ENCODE measurements at regions of chr2 and their contacts with region 1.

Region 1: DNA sequence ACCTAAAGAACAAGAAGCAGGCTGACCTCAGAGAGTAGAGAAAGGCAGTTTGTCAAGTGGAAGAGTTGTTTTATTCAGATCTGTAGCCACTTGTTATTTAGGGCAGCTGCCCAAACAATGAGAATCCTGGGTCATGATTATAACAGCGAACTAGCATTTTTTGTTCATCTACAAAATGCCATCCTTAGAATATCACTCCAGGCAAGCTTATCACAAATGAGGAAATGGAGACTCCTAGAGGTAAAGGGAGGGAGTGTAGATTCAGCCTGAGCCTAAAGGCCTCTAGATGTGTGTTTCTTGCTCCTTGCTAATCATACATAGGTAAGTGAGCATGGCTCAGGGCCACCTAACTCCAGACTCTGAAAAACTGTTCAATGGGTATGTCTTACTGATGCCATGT is 126.1 kb downstream of the HNMT start:
- DNase-seq: peak; percentile 76
- H3K4me3 ChIP-seq: no peak overlapping the region
- H3K27ac ChIP-seq: no peak overlapping the region
- H3K4me1 ChIP-seq: no peaks in the 10 kb centered on the region
- H3K27me3 ChIP-seq: no peaks in the 10 kb centered on the region
- CTCF ChIP-seq: peak; percentile 53 to 70
- POLR2A ChIP-seq: no peak

Region 2: GRCh38 chr2:137729305-137729704 is 361.0 kb before region 1 on chr2:
- CTCF ChIA-PET with region 1: no interaction called
- POLR2A ChIA-PET with region 1: no interaction called
- dilution Hi-C with region 1: no loop called
- intact Hi-C with region 1: no loop called
- DNase-seq: no peak
- H3K4me3 ChIP-seq: no peak overlapping the region
- H3K27ac ChIP-seq: no peak overlapping the region
- H3K4me1 ChIP-seq: no peaks in the 10 kb centered on the region
- H3K27me3 ChIP-seq: no peaks in the 10 kb centered on the region
- CTCF ChIP-seq: no peak
- POLR2A ChIP-seq: no peak

Region 3: GRCh38 chr2:137888845-137889244 is 201.5 kb before region 1 on chr2:
- CTCF ChIA-PET with region 1: interaction called, 34 read pairs
- POLR2A ChIA-PET with region 1: no interaction called
- dilution Hi-C with region 1: no loop called
- intact Hi-C with region 1: loop called (anchors 1 kb)
- DNase-seq: peak; percentile 31
- H3K4me3 ChIP-seq: no peak overlapping the region
- H3K27ac ChIP-seq: no peak overlapping the region
- H3K4me1 ChIP-seq: no peaks in the 10 kb centered on the region
- H3K27me3 ChIP-seq: no peaks in the 10 kb centered on the region
- CTCF ChIP-seq: peak; percentile 23 to 67
- POLR2A ChIP-seq: no peak

Region 4: GRCh38 chr2:137942037-137942832 is 148.1 kb before region 1 on chr2:
- CTCF ChIA-PET with region 1: interaction called, 103 read pairs
- POLR2A ChIA-PET with region 1: no interaction called
- dilution Hi-C with region 1: no loop called
- intact Hi-C with region 1: loop called (anchors 1 kb)
- DNase-seq: no peak
- H3K4me3 ChIP-seq: no peak overlapping the region
- H3K27ac ChIP-seq: no peak overlapping the region
- H3K4me1 ChIP-seq: no peaks in the 10 kb centered on the region
- H3K27me3 ChIP-seq: no peaks in the 10 kb centered on the region
- CTCF ChIP-seq: no peak
- POLR2A ChIP-seq: no peak

Region 5: DNA sequence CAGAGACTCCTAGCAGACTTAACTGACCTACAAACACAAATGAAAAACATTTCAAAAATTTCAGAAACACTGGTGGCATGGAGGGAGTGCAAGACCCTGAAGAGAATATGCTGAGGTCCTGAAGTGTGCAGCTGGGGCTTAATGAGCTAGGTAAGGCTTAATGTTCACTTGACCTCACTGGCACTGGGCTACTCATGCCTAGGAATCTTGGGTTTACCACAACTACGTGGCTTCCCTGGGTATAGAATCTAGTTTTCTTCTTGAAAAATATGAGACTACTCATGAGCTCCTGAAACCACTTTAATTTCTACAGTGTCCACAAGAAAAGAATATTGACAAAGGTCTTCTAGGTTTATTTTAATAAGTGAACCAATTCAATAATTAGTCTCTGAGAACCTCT is 13.7 kb after region 1 on chr2:
- CTCF ChIA-PET with region 1: interaction called, 25 read pairs
- POLR2A ChIA-PET with region 1: no interaction called
- dilution Hi-C with region 1: no loop called
- intact Hi-C with region 1: no loop called
- DNase-seq: no peak
- H3K4me3 ChIP-seq: no peak overlapping the region
- H3K27ac ChIP-seq: no peak overlapping the region
- H3K4me1 ChIP-seq: no peaks in the 10 kb centered on the region
- H3K27me3 ChIP-seq: no peaks in the 10 kb centered on the region
- CTCF ChIP-seq: no peak
- POLR2A ChIP-seq: no peak